CD8-positive, alpha-beta T cell (primary cell): ENCODE measurements at regions of chr9 and their contacts with region 1.

Region 1: DNA sequence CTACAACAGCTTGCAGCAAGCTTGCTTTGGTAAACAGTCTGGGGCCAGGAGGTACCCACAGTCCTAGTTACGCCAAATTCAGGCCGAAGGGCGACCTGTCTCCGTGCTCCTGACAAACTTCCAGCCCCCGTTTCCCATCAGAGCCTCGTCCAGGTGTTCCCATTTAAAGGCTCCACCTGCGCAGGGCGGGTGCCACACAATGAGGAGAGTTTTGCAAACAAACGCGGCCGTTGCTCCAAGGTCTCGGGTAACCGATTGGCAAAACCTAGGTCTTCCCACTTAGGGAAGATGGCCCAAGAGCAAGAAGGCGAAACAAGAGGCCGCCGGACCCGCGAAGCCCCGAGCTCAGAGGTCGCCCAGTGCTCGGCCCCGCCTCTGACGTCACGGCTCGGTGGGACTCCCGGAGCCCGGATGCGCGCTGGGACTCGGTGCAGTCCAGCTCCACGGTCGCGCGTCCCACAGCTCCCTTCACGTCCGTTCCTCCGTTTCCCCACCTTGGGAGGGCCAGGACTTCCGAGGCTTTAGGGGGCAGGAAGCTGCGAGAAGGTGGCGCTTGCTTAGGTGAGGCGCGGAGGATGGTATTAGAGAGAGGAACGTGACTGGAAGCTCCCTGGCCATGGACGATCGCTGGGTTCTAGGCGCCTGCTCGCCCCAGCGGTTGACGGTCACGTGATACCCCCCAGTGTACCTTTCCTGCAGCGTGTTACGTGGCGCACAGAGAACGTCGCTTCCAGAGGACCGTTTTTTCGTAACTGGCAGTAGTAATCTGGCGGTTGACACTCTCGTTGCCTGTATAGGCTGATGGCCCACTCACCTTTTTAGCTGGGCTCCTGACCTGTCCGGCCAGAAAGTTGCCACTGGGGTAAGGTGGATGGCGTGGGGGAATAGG is 41.8 kb upstream of the KDM4C start:
- DNase-seq: peak; percentile 41 to 86 (median 69)
- ATAC-seq: peak; percentile 85
- H3K4me3 ChIP-seq: peak overlapping the region; percentile 44 to 71
- H3K4me3 Mint-ChIP-seq: peak overlapping the region; percentile 88
- H3K27ac ChIP-seq: peak overlapping the region; percentile 25 to 72
- H3K27ac Mint-ChIP-seq: peak overlapping the region; percentile 88
- H3K4me1 ChIP-seq: no peaks in the 10 kb centered on the region
- H3K4me1 Mint-ChIP-seq: peaks cover 11% of the 10 kb centered on the region
- H3K27me3 ChIP-seq: no peaks in the 10 kb centered on the region
- H3K27me3 Mint-ChIP-seq: no peaks in the 10 kb centered on the region
- CTCF ChIP-seq: no peak

Region 2: DNA sequence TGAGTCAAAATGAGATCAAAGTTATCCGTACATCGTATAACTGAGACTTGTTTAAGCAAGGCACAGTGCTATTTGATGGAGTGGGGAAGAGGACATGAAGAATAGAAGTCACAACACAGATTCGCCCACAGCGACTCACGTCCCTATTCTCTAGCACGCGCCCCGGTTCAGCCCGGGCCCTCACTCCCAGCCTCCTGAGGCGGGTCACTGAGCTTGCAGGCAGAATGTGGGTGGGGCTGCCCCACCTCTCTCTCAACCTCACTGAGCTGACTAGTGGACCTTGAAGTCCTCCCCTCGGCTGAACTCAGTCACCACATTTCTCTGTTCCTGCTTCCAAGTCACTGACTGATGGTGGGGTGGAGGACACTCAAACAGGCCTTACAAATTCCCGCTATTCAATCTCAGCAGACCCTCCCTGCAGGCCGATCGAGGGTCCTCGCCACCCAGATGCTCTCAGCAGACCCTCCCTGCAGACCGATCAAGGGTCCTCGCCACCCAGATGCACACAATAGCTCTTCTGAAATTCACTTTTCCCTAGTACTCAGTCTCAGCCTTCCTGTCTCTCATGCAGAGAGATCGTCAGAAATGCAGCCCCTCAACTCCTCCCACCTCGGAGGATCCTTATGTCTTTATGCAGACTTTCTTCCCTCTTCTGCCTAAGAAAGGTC is 83.3 kb before region 1 on chr9:
- CTCF ChIA-PET with region 1: no interaction called
- POLR2A ChIA-PET with region 1: no interaction called
- intact Hi-C with region 1: no loop called
- DNase-seq: no peak
- ATAC-seq: no peak
- H3K4me3 ChIP-seq: no peak overlapping the region
- H3K4me3 Mint-ChIP-seq: no peak overlapping the region
- H3K27ac ChIP-seq: no peak overlapping the region
- H3K27ac Mint-ChIP-seq: no peak overlapping the region
- H3K4me1 ChIP-seq: no peaks in the 10 kb centered on the region
- H3K4me1 Mint-ChIP-seq: no peaks in the 10 kb centered on the region
- H3K27me3 ChIP-seq: no peaks in the 10 kb centered on the region
- H3K27me3 Mint-ChIP-seq: peaks cover 25% of the 10 kb centered on the region
- CTCF ChIP-seq: no peak

Region 3: GRCh38 chr9:6703898-6704639 is 11.9 kb before region 1 on chr9:
- CTCF ChIA-PET with region 1: no interaction called
- POLR2A ChIA-PET with region 1: interaction called, 9 read pairs
- intact Hi-C with region 1: loop called in 1 of 2 experiments (anchors 1 kb)
- DNase-seq: peak; percentile 61 to 94 (median 86)
- ATAC-seq: peak; percentile 82
- H3K4me3 ChIP-seq: peak overlapping the region; percentile 80 to 99
- H3K4me3 Mint-ChIP-seq: peak overlapping the region; percentile 100
- H3K27ac ChIP-seq: peak overlapping the region; percentile 94 to 96
- H3K27ac Mint-ChIP-seq: peak overlapping the region; percentile 100
- H3K4me1 ChIP-seq: peaks cover 10% of the 10 kb centered on the region
- H3K4me1 Mint-ChIP-seq: peaks cover 13% of the 10 kb centered on the region
- H3K27me3 ChIP-seq: no peaks in the 10 kb centered on the region
- H3K27me3 Mint-ChIP-seq: no peaks in the 10 kb centered on the region
- CTCF ChIP-seq: no peak